HCT116 (cell line): ENCODE measurements at regions of chr1 and their contacts with region 1.

Region 1: GRCh38 chr1:227437495-227438008 is 119.3 kb upstream of the CDC42BPA start:
- DNase-seq: peak; percentile 55
- ATAC-seq: peak; percentile 91
- H3K4me3 ChIP-seq: peak overlapping the region; percentile 28 to 33; a peak in 3 of 4 replicates
- H3K27ac ChIP-seq: no peak overlapping the region
- H3K4me1 ChIP-seq: no peaks in the 10 kb centered on the region; a peak in 1 of 4 replicates
- H3K27me3 ChIP-seq: no peaks in the 10 kb centered on the region
- CTCF ChIP-seq: peak; percentile 29 to 83 (median 64); a peak in 5 of 6 replicates
- POLR2A ChIP-seq: no peak
- RAD21 ChIP-seq: peak; percentile 96

Region 2: DNA sequence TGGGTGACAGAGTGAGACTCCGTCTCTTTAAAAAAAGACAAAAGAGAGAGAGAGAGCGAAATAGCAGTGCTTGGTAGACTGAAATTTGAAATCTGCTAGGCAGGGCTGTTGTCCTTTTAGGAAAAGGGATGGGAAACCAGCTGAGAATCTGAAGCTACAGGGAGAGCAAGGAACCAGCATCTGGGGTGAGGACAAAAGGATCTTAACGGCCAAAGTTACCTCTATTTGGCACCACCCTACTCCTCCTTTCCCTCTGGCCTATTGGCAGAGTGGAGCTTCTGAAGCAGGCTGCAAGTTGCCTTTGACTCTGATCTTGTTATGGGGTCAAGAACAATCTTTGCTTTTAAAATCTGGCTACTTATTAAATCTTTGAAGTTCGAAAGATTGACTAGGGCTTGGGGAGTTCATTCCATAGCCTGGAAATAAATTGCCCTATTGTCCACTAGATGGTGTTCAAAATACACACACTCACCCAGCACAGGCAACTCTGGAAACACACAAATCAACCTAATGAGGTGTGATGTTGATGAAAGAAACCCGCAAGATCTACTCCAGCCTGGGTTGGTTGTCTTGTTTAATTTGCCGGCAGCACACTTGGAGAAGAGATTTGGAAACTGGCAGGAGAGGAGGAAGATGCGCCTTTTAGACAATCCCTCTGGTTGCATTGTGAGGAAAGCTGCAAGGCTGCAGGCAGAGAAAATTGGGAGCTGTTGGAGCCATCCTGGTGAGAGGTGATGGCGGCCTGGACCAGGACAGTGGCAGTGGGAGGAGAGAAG is 1013.1 kb before region 1 on chr1:
- CTCF ChIA-PET with region 1: no interaction called
- POLR2A ChIA-PET with region 1: no interaction called
- RAD21 ChIA-PET with region 1: no interaction called
- intact Hi-C with region 1: loop called (anchors 10 kb)
- DNase-seq: peak; percentile 28
- ATAC-seq: peak; percentile 92
- H3K4me3 ChIP-seq: no peak overlapping the region
- H3K27ac ChIP-seq: no peak overlapping the region
- H3K4me1 ChIP-seq: peaks cover 0 to 7% of the 10 kb centered on the region in 2 experiments; a peak in 2 of 4 replicates
- H3K27me3 ChIP-seq: no peaks in the 10 kb centered on the region
- CTCF ChIP-seq: peak; percentile 63 to 75 (median 75)
- POLR2A ChIP-seq: no peak
- RAD21 ChIP-seq: peak; percentile 88

Region 3: GRCh38 chr1:226626577-226626956 is 811.0 kb before region 1 on chr1:
- CTCF ChIA-PET with region 1: interaction called, 3 read pairs
- POLR2A ChIA-PET with region 1: no interaction called
- RAD21 ChIA-PET with region 1: no interaction called
- intact Hi-C with region 1: loop called (anchors 2 kb)
- DNase-seq: peak; percentile 51
- ATAC-seq: peak; percentile 95
- H3K4me3 ChIP-seq: no peak overlapping the region
- H3K27ac ChIP-seq: no peak overlapping the region
- H3K4me1 ChIP-seq: peaks cover 0 to 3% of the 10 kb centered on the region in 2 experiments; a peak in 1 of 4 replicates
- H3K27me3 ChIP-seq: 0 out of 2 replicates have a peak, but pooled peaks cover 3% of the 10 kb centered on the region
- CTCF ChIP-seq: peak; percentile 87 to 97 (median 93)
- POLR2A ChIP-seq: no peak
- RAD21 ChIP-seq: peak; percentile 88

Region 4: GRCh38 chr1:226827968-226828513 is 609.5 kb before region 1 on chr1:
- CTCF ChIA-PET with region 1: no interaction called
- POLR2A ChIA-PET with region 1: no interaction called
- RAD21 ChIA-PET with region 1: no interaction called
- intact Hi-C with region 1: loop called (anchors 5 kb)
- DNase-seq: peak; percentile 90
- ATAC-seq: peak; percentile 100
- H3K4me3 ChIP-seq: no peak overlapping the region; a peak in 1 of 4 replicates
- H3K27ac ChIP-seq: peak overlapping the region; percentile 25; the same call in 1 of the 2 replicates
- H3K4me1 ChIP-seq: peaks cover 9 to 26% of the 10 kb centered on the region in 2 experiments
- H3K27me3 ChIP-seq: no peaks in the 10 kb centered on the region
- CTCF ChIP-seq: peak; percentile 89 to 94 (median 93)
- POLR2A ChIP-seq: no peak
- RAD21 ChIP-seq: peak; percentile 100

Region 5: DNA sequence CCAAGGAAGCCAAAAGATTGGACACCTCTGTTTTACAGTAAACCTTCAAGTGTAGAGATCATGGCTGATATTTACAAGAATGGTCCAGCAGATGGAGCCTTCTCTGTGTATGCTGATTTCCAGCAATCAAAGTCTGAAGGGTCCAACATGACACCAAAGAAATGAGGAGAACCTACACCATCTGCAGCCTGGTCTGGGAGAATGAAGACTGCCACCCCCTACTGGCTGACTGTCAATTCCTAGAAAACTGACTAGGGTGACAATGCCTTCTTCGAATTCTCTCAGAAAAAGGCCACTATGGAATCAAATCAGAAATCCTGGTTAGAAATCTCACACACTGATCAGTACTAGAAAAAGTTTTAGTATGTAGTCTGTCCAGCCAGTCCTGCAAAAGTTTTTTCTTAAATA is 202.6 kb before region 1 on chr1:
- CTCF ChIA-PET with region 1: no interaction called
- POLR2A ChIA-PET with region 1: no interaction called
- RAD21 ChIA-PET with region 1: no interaction called
- intact Hi-C with region 1: loop called (anchors 1 kb)
- DNase-seq: peak; percentile 63
- ATAC-seq: peak; percentile 95
- H3K4me3 ChIP-seq: no peak overlapping the region
- H3K27ac ChIP-seq: no peak overlapping the region
- H3K4me1 ChIP-seq: peaks cover 0 to 17% of the 10 kb centered on the region in 2 experiments; a peak in 1 of 4 replicates
- H3K27me3 ChIP-seq: no peaks in the 10 kb centered on the region
- CTCF ChIP-seq: peak; percentile 52 to 72 (median 56)
- POLR2A ChIP-seq: no peak
- RAD21 ChIP-seq: peak; percentile 68

Region 6: GRCh38 chr1:227369102-227369760 is 68.3 kb before region 1 on chr1:
- CTCF ChIA-PET with region 1: no interaction called
- POLR2A ChIA-PET with region 1: no interaction called
- RAD21 ChIA-PET with region 1: no interaction called
- intact Hi-C with region 1: no loop called
- DNase-seq: no peak
- ATAC-seq: no peak
- H3K4me3 ChIP-seq: no peak overlapping the region
- H3K27ac ChIP-seq: no peak overlapping the region
- H3K4me1 ChIP-seq: no peaks in the 10 kb centered on the region
- H3K27me3 ChIP-seq: no peaks in the 10 kb centered on the region
- CTCF ChIP-seq: no peak
- POLR2A ChIP-seq: no peak
- RAD21 ChIP-seq: no peak

Region 7: GRCh38 chr1:227465256-227465655 is 27.7 kb after region 1 on chr1:
- CTCF ChIA-PET with region 1: no interaction called
- POLR2A ChIA-PET with region 1: no interaction called
- RAD21 ChIA-PET with region 1: no interaction called
- intact Hi-C with region 1: no loop called
- DNase-seq: no peak
- ATAC-seq: peak; percentile 40; the same call in 1 of the 2 replicates
- H3K4me3 ChIP-seq: no peak overlapping the region
- H3K27ac ChIP-seq: no peak overlapping the region
- H3K4me1 ChIP-seq: no peaks in the 10 kb centered on the region
- H3K27me3 ChIP-seq: no peaks in the 10 kb centered on the region
- CTCF ChIP-seq: peak in 1 of 3 experiments; percentile 16; a peak in 2 of 6 replicates
- POLR2A ChIP-seq: no peak
- RAD21 ChIP-seq: no peak

Region 8: GRCh38 chr1:228349701-228350171 is 912.2 kb after region 1 on chr1:
- CTCF ChIA-PET with region 1: no interaction called
- POLR2A ChIA-PET with region 1: no interaction called
- RAD21 ChIA-PET with region 1: no interaction called
- intact Hi-C with region 1: no loop called
- DNase-seq: no peak
- ATAC-seq: no peak
- H3K4me3 ChIP-seq: no peak overlapping the region
- H3K27ac ChIP-seq: no peak overlapping the region
- H3K4me1 ChIP-seq: peaks cover 0 to 4% of the 10 kb centered on the region in 2 experiments; a peak in 1 of 4 replicates
- H3K27me3 ChIP-seq: no peaks in the 10 kb centered on the region
- CTCF ChIP-seq: no peak
- POLR2A ChIP-seq: no peak
- RAD21 ChIP-seq: no peak